Activated T-helper 1 cell treated with anti-CD3 and anti-CD28 coated beads, Interleukin-12 subunit alpha, Interleukin-12 subunit beta, Interleukin-2, Interleukin-4 antibody, amounts not matched to agents 30 ng/mL and 10 ng/mL and 1 ng/mL, durations not matched to agents 14 hours and 24 hours and 36 hours (primary cell): ENCODE measurements at regions of chr3 and their contacts with region 1.

Region 1: GRCh38 chr3:39180546-39181346 is 11.6 kb downstream of the XIRP1 start:
- DNase-seq: peak; percentile 86
- H3K4me3 Mint-ChIP-seq: peak overlapping the region; percentile 84
- H3K27ac Mint-ChIP-seq: peak overlapping the region; percentile 79
- H3K4me1 Mint-ChIP-seq: peaks cover 51% of the 10 kb centered on the region
- H3K27me3 Mint-ChIP-seq: no peaks in the 10 kb centered on the region

Region 2: DNA sequence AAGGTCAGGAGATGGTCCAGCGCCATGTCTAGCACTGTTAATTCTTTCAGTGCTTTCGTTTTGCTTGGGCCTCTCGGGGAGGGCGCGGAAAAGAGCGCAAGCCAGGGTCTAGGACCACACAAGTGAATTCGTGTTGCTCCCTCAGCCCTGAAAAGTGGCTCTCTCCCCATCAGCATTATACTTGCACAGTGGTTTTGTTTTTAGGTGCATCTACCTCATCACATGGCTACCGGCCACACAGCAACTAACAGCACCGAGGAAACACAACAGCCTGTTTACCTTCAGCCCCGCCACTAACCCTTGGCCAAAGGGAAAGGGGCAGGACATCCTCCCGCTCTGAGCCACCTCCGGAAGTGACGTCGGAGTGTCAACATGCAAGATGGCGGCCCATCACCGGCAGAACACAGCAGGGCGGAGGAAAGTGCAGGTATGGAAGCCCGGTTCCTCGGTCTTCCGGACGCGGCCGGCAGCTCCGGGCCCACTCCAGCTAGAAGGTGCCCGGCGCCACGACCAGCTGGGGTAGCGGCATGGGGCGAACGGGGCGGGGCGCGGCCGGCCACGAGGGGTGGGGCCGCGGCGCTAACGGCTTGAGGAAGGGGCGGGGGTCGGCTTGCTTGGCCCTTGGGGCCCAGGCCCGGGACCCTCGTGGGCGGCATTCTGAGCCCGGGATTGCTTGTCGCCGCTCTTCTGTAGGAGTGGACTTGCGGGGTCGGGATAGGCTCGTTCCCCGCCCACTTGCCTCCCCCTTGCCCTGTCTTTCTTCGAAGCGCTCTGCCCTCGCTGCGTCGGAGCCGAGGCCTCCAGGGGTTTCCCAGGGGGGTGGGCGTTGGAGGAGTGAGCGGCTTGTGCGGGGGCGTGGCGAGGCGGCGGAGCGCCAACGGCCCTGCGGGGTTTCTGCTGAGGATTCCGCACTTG is 128.8 kb before region 1 on chr3 and contains the starts of genes SCN11A and WDR48:
- intact Hi-C with region 1: loop called (anchors 2 kb)
- DNase-seq: peak; percentile 91
- H3K4me3 Mint-ChIP-seq: peak within 1 kb of the TSS; percentile 93
- H3K27ac Mint-ChIP-seq: peak within 1 kb of the TSS; percentile 95
- H3K4me1 Mint-ChIP-seq: peaks cover 30% of the 10 kb centered on the region
- H3K27me3 Mint-ChIP-seq: no peaks in the 10 kb centered on the region
- total RNA-seq, gene SCN11A: 0.05 TPM in 1 of 2 replicates, not detected in the other
- total RNA-seq, gene WDR48: 40.6 and 41.5 TPM in 2 replicates

Region 3: DNA sequence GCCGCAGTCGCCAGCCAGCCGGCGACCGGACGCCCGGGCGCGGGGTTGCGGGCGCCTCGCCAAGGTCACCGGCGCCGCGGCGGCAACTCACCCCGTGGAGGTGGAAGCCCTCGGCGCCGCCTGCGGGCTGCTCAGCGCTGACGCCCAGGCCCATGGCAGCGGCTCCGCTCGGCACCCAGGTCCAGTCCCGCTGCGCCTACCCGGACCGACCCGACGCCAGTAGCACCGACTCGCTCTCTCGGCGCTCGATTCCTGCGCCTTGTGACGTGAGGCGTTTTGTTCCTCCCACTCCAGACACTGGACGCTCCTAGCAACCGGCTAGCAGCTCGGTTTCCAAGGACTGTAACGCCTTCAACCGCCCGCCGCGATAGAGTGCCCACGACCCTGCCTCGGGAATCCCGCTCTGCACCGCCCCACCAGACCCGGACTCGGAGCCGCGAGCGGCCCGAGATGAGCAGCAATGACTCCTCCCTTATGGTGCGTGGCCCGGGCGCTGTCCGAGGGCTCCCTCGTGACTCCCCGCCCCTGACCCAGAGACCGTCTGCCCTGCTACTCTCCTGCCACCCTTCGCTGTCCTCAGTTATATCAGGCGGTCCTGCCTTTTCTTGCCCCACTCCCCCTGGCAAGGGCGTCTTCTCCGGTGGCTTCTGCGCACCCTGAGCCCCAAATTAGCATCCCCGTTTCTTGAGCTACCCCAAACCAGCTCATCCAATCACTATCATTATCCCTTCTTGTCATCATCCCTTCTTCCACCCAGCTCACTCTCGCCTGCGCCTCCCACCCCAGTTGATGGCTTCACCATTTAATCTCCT is 73.2 kb before region 1 on chr3 and contains the starts of genes GORASP1 and TTC21A:
- intact Hi-C with region 1: loop called (anchors 1 kb)
- DNase-seq: peak; percentile 65
- H3K4me3 Mint-ChIP-seq: peak within 1 kb of the TSS; percentile 93
- H3K27ac Mint-ChIP-seq: peak within 1 kb of the TSS; percentile 69
- H3K4me1 Mint-ChIP-seq: peaks cover 53% of the 10 kb centered on the region
- H3K27me3 Mint-ChIP-seq: peaks cover 7% of the 10 kb centered on the region
- total RNA-seq, gene GORASP1: 26.6 and 35.6 TPM in 2 replicates
- total RNA-seq, gene TTC21A: 0.83 and 1.0 TPM in 2 replicates

Region 4: DNA sequence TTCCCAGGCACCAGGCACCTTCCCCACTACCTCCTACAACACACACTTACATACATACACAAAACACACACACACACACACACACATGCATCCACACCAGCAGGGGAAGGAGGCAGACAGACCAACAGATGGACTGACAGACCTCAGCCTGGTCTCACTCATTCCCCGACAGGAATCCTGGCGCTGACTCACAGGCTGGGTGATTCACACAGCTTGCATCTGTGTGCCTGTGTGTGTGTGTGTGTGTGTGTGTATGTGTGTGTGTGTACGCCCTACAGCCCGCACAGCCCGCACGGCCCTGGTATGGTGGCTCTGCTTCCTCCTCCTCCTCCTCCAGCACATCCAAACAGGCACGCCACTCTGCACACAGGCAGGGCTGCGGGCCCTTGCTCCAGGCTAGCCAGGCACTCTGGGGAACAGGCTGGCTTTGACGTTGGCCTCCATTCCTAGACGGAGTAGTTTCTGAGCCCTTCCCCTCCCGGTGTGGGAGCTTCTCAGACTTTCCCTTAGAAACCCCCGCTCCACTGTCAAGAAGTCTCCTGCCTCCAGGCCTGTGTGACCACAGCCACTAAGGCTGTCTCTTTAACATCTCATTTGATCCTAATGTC is 33.7 kb before region 1 on chr3:
- intact Hi-C with region 1: loop called (anchors 1 kb)
- DNase-seq: peak; percentile 64
- H3K4me3 Mint-ChIP-seq: peak overlapping the region; percentile 94
- H3K27ac Mint-ChIP-seq: peak overlapping the region; percentile 97
- H3K4me1 Mint-ChIP-seq: peaks cover 69% of the 10 kb centered on the region
- H3K27me3 Mint-ChIP-seq: no peaks in the 10 kb centered on the region

Region 5: DNA sequence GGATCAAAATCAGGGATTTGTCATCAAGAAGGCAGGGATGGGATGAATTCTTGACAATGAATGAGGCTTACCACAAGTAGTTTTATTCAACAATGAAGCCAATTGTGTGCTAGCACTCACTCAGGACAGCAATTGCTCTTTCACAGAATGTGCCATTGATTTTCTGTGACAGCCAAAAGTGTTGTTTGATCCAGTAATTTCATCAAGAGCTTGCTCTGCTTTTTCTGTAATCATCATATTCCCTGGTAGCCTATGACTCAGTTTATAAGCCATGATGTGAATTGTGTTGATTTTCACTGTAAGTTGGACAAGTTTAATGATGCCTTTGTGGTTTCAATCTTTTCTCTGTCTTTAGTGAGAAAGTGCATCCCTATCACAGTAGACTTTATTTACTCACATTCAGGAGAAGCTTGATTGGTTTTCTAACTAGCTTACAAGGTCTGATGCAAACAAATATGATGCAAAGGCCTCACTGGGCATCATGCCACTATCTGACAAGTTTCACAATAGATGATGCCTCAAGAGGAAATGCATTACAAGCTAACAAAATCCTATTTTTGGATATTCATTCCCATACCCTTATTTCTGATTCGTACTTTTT is 13.7 kb before region 1 on chr3:
- intact Hi-C with region 1: loop called (anchors 1 kb)
- DNase-seq: no peak
- H3K4me3 Mint-ChIP-seq: no peak overlapping the region
- H3K27ac Mint-ChIP-seq: no peak overlapping the region
- H3K4me1 Mint-ChIP-seq: peaks cover 24% of the 10 kb centered on the region
- H3K27me3 Mint-ChIP-seq: peaks cover 1% of the 10 kb centered on the region

Region 6: DNA sequence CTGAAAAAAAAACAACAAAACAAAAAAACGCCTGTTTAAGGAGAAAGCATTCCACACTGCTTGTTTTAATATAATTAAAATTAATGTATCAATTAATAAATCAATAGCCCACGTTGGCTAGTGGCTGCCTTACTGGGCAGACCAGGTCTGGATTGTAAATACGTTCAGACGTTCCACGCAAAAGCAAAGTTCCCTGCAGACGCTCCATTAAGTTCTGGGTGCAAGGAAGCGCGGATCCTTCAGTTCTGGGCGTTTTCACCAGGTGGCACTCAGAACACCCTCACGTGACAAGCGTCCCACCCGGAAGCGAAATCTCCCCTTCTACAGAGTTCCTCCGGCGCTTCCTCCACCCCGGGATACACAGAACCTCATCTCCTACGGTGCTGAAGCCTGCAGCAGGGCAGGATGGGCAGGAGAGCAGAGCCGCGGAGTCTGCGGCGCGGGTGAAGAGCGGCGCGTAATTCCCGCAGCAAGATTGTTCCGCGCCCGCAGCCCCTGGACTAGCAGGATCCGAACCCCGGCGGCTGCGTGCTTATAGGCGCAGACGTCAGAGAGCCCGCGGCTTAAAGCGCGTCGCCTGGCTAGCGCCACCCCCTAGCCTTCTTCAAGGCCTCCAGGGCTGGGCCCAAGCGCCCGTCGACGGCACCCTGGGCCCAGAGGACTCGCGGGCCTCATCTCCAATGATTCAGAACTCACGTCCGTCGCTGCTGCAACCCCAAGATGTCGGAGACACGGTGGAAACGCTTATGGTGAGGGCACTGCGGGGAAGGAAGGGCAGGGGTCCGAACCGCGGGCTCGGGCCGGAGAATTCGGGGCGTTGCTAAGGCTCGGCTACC is 202.5 kb after region 1 on chr3 and contains the start of gene SLC25A38:
- intact Hi-C with region 1: loop called (anchors 1 kb)
- DNase-seq: peak; percentile 74
- H3K4me3 Mint-ChIP-seq: peak within 1 kb of the TSS; percentile 94
- H3K27ac Mint-ChIP-seq: peak within 1 kb of the TSS; percentile 97
- H3K4me1 Mint-ChIP-seq: peaks cover 34% of the 10 kb centered on the region
- H3K27me3 Mint-ChIP-seq: no peaks in the 10 kb centered on the region
- total RNA-seq, gene SLC25A38: 40.0 and 43.1 TPM in 2 replicates